Natural killer cell (primary cell): ENCODE measurements at regions of chr7 and their contacts with region 1.

Region 1: GRCh38 chr7:35424869-35425495 is 171.1 kb upstream of the TBX20 start:
- DNase-seq: peak; percentile 49 to 76
- ATAC-seq: peak; percentile 86 to 97 (median 95)
- H3K4me3 ChIP-seq: no peak overlapping the region
- H3K4me3 Mint-ChIP-seq: no peak overlapping the region
- H3K27ac ChIP-seq: no peak overlapping the region
- H3K27ac Mint-ChIP-seq: no peak overlapping the region
- H3K4me1 ChIP-seq: no peaks in the 10 kb centered on the region
- H3K4me1 Mint-ChIP-seq: peaks cover 0 to 6% of the 10 kb centered on the region in 2 donors
- H3K27me3 ChIP-seq: no peaks in the 10 kb centered on the region
- H3K27me3 Mint-ChIP-seq: peaks cover 2 to 20% of the 10 kb centered on the region in 2 donors
- CTCF ChIP-seq: peak; percentile 78

Region 2: GRCh38 chr7:35339811-35340210 is 85.2 kb before region 1 on chr7:
- intact Hi-C with region 1: no loop called
- DNase-seq: no peak
- ATAC-seq: no peak
- H3K4me3 ChIP-seq: no peak overlapping the region
- H3K4me3 Mint-ChIP-seq: no peak overlapping the region
- H3K27ac ChIP-seq: no peak overlapping the region
- H3K27ac Mint-ChIP-seq: no peak overlapping the region
- H3K4me1 ChIP-seq: no peaks in the 10 kb centered on the region
- H3K4me1 Mint-ChIP-seq: no peaks in the 10 kb centered on the region
- H3K27me3 ChIP-seq: no peaks in the 10 kb centered on the region
- H3K27me3 Mint-ChIP-seq: peaks cover 9 to 17% of the 10 kb centered on the region in 2 donors
- CTCF ChIP-seq: no peak

Region 3: GRCh38 chr7:35374538-35375257 is 50.3 kb before region 1 on chr7:
- intact Hi-C with region 1: no loop called
- DNase-seq: no peak
- ATAC-seq: no peak
- H3K4me3 ChIP-seq: no peak overlapping the region
- H3K4me3 Mint-ChIP-seq: no peak overlapping the region
- H3K27ac ChIP-seq: no peak overlapping the region
- H3K27ac Mint-ChIP-seq: no peak overlapping the region
- H3K4me1 ChIP-seq: no peaks in the 10 kb centered on the region
- H3K4me1 Mint-ChIP-seq: no peaks in the 10 kb centered on the region
- H3K27me3 ChIP-seq: no peaks in the 10 kb centered on the region
- H3K27me3 Mint-ChIP-seq: peaks cover 6 to 18% of the 10 kb centered on the region in 2 donors
- CTCF ChIP-seq: no peak

Region 4: DNA sequence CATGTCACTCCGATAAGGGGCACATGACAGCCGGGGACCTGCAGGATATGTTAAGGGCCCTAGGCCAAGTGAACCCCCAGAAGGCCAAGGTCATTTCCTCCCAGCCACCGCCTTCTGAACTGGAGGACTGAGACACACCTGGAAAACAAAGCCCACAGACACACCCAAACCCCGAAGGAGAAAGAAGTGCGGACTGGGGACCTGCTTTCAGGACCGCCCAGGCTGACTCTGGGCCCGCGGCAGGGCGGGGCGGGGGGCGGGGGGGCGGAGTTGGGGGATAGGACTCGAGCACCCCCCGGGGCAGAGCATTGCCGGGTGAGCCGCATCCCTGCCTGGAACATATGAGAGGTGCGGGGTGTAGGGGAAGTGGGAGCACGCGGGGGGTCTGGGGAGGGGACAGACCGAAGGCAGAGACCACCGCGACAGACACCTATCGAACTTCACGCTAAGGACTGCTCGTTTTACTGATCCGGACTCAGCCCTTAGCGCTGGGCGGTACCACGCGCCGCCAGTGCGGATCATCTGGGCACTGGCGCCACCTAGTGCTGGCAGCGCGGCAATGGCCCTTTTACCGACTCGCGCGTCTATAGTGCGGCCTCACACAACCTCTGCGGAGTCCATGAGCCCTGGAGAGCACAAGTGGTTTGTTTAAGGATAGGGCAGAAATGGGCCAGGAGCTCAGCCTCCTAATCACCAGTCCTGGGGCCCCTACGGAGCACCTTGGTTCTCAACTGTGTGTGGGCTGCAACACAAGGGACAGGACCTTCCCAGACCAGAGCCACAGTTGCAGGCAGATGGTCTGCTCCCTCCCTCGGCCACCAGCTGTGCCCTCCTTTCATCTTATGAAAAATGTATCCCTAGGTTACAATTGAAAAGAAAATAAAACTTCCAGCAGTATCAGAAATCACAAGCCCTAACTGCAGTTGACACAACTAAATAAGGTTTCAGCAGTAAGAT is 112.4 kb after region 1 on chr7:
- intact Hi-C with region 1: loop called (anchors 1 kb)
- DNase-seq: peak; percentile 74 to 88
- ATAC-seq: peak; percentile 97 to 99 (median 99)
- H3K4me3 ChIP-seq: peak overlapping the region; percentile 20
- H3K4me3 Mint-ChIP-seq: peak overlapping the region; percentile 80
- H3K27ac ChIP-seq: no peak overlapping the region
- H3K27ac Mint-ChIP-seq: no peak overlapping the region
- H3K4me1 ChIP-seq: peaks cover 4% of the 10 kb centered on the region
- H3K4me1 Mint-ChIP-seq: peaks cover 0 to 4% of the 10 kb centered on the region in 2 donors
- H3K27me3 ChIP-seq: no peaks in the 10 kb centered on the region
- H3K27me3 Mint-ChIP-seq: peaks cover 8 to 10% of the 10 kb centered on the region in 2 donors
- CTCF ChIP-seq: peak; percentile 92

Region 5: DNA sequence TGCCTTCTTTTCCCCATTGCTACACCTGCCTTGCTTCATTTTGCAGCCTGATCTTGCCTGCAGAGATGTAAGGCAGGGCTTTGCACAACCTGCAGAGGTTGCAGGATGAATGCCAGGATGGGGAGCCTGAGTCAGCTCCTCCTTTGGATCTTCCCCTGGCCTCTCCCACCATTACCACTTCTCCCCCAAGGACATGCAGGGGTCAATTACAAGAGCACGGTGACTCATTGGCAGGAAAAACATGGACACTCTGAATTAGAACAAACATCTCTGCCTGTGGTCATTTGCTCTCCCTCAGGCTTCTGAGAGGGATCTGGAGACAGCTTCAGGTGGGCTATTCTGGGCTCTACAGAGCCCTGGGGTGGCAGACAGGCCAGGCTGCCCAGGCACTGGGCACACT is 180.8 kb after region 1 on chr7:
- intact Hi-C with region 1: no loop called
- DNase-seq: no peak
- ATAC-seq: no peak
- H3K4me3 ChIP-seq: no peak overlapping the region
- H3K4me3 Mint-ChIP-seq: no peak overlapping the region
- H3K27ac ChIP-seq: no peak overlapping the region
- H3K27ac Mint-ChIP-seq: no peak overlapping the region
- H3K4me1 ChIP-seq: no peaks in the 10 kb centered on the region
- H3K4me1 Mint-ChIP-seq: no peaks in the 10 kb centered on the region
- H3K27me3 ChIP-seq: no peaks in the 10 kb centered on the region
- H3K27me3 Mint-ChIP-seq: no peaks in the 10 kb centered on the region
- CTCF ChIP-seq: no peak

Region 6: DNA sequence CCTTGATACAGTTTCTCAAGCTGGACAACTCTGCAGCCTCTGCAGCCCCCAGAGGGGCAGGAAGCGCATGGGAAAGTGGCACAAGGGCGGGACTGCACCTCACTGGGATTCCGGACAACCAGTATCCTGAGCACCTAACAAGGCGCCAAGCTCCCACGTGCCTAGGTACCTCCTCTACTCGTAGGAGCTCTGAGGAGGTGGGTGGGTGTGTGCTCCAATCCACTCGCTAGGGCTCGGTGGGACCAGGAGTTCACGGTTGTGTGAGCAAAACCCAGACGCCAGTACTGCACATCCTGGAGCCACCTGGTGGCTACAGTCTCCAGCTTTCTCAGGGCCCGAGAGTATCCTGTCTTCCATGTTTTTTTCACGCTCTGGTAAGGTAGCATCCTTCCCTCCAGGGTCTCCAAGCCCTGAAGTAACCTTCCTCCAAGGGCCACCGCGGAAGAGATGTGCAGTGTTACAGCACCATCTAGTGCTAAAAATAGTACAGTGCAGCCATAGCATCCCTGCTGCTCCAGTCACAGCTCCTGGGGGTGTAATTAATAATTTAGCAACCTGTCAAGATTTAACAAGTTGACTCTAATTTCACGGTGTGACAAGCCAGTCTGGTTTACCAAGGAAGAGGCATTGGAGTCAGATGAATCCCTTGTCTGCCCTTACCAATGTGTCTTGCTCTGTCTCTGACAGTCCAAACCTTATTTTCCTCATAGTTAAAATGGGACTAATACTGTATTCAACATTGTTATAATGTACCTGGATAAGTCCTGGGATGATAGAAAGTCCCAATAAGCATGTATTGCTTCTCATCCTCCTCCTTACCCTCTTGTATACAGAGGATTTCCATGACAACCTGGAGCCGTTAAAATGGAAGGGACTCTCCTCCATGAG is 199.6 kb after region 1 on chr7:
- intact Hi-C with region 1: loop called (anchors 1 kb)
- DNase-seq: peak; percentile 20 to 72
- ATAC-seq: peak; percentile 83 to 94 (median 93)
- H3K4me3 ChIP-seq: no peak overlapping the region
- H3K4me3 Mint-ChIP-seq: no peak overlapping the region
- H3K27ac ChIP-seq: no peak overlapping the region
- H3K27ac Mint-ChIP-seq: peak overlapping the region in 1 of 2 donors; percentile 75
- H3K4me1 ChIP-seq: peaks cover 4% of the 10 kb centered on the region
- H3K4me1 Mint-ChIP-seq: peaks cover 5 to 6% of the 10 kb centered on the region in 2 donors
- H3K27me3 ChIP-seq: no peaks in the 10 kb centered on the region
- H3K27me3 Mint-ChIP-seq: no peaks in the 10 kb centered on the region
- CTCF ChIP-seq: peak; percentile 84

Region 7: DNA sequence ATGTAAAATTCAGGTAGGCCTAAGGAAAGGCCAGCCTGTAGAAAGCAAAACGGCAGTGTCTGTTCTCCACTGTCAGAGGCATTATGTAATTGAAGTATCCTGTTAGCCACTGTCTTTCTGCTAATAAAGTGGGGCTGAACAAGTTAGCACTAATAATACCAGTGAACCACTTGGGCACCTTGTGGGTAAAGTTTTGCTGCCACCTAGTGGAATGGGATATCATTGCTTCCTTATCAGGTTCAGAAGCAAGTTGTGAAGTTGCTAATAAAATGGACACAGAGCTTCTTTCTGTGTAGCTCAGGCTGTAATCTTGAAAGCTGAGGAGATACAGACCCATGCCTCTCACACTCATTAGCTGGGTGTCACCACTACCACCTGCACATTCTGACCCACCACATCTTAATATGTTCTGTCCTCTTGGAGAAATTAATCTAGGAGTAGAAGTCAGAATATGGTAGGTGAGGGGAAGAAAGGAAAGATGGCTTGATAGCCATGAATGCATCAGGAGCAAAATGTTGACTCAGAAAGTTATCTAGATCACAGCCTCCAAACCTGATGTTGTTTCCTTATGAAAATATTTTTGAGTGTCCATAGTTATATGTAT is 551.0 kb after region 1 on chr7:
- intact Hi-C with region 1: loop called (anchors 5 kb)
- DNase-seq: peak in 1 of 2 donors; percentile 85
- ATAC-seq: peak; percentile 64 to 83 (median 83)
- H3K4me3 ChIP-seq: no peak overlapping the region
- H3K4me3 Mint-ChIP-seq: no peak overlapping the region
- H3K27ac ChIP-seq: no peak overlapping the region
- H3K27ac Mint-ChIP-seq: no peak overlapping the region
- H3K4me1 ChIP-seq: no peaks in the 10 kb centered on the region
- H3K4me1 Mint-ChIP-seq: peaks cover 5 to 7% of the 10 kb centered on the region in 2 donors
- H3K27me3 ChIP-seq: peaks cover 2% of the 10 kb centered on the region
- H3K27me3 Mint-ChIP-seq: peaks cover 28 to 33% of the 10 kb centered on the region in 2 donors
- CTCF ChIP-seq: peak; percentile 81